CD8-positive, alpha-beta memory T cell (primary cell): ENCODE measurements at regions of chr9 and their contacts with region 1.

Region 1: DNA sequence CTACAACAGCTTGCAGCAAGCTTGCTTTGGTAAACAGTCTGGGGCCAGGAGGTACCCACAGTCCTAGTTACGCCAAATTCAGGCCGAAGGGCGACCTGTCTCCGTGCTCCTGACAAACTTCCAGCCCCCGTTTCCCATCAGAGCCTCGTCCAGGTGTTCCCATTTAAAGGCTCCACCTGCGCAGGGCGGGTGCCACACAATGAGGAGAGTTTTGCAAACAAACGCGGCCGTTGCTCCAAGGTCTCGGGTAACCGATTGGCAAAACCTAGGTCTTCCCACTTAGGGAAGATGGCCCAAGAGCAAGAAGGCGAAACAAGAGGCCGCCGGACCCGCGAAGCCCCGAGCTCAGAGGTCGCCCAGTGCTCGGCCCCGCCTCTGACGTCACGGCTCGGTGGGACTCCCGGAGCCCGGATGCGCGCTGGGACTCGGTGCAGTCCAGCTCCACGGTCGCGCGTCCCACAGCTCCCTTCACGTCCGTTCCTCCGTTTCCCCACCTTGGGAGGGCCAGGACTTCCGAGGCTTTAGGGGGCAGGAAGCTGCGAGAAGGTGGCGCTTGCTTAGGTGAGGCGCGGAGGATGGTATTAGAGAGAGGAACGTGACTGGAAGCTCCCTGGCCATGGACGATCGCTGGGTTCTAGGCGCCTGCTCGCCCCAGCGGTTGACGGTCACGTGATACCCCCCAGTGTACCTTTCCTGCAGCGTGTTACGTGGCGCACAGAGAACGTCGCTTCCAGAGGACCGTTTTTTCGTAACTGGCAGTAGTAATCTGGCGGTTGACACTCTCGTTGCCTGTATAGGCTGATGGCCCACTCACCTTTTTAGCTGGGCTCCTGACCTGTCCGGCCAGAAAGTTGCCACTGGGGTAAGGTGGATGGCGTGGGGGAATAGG is 41.8 kb upstream of the KDM4C start:
- DNase-seq: peak; percentile 27 to 80 (median 57)
- H3K4me3 ChIP-seq: peak overlapping the region; percentile 53
- H3K4me3 Mint-ChIP-seq: peak overlapping the region; percentile 85 to 91 (median 88)
- H3K27ac ChIP-seq: no peak overlapping the region
- H3K27ac Mint-ChIP-seq: peak overlapping the region; percentile 70 to 91 (median 86)
- H3K4me1 ChIP-seq: peaks cover 4% of the 10 kb centered on the region
- H3K4me1 Mint-ChIP-seq: peaks cover 4 to 13% (median 6%) of the 10 kb centered on the region in 3 donors
- H3K27me3 ChIP-seq: no peaks in the 10 kb centered on the region
- H3K27me3 Mint-ChIP-seq: peaks cover 0 to 2% of the 10 kb centered on the region in 2 donors

Region 2: GRCh38 chr9:6692881-6693361 is 23.1 kb before region 1 on chr9:
- CTCF ChIA-PET with region 1: no interaction called
- POLR2A ChIA-PET with region 1: no interaction called
- DNase-seq: no peak
- H3K4me3 ChIP-seq: no peak overlapping the region
- H3K4me3 Mint-ChIP-seq: no peak overlapping the region
- H3K27ac ChIP-seq: no peak overlapping the region
- H3K27ac Mint-ChIP-seq: no peak overlapping the region
- H3K4me1 ChIP-seq: no peaks in the 10 kb centered on the region
- H3K4me1 Mint-ChIP-seq: no peaks in the 10 kb centered on the region
- H3K27me3 ChIP-seq: no peaks in the 10 kb centered on the region
- H3K27me3 Mint-ChIP-seq: no peaks in the 10 kb centered on the region

Region 3: DNA sequence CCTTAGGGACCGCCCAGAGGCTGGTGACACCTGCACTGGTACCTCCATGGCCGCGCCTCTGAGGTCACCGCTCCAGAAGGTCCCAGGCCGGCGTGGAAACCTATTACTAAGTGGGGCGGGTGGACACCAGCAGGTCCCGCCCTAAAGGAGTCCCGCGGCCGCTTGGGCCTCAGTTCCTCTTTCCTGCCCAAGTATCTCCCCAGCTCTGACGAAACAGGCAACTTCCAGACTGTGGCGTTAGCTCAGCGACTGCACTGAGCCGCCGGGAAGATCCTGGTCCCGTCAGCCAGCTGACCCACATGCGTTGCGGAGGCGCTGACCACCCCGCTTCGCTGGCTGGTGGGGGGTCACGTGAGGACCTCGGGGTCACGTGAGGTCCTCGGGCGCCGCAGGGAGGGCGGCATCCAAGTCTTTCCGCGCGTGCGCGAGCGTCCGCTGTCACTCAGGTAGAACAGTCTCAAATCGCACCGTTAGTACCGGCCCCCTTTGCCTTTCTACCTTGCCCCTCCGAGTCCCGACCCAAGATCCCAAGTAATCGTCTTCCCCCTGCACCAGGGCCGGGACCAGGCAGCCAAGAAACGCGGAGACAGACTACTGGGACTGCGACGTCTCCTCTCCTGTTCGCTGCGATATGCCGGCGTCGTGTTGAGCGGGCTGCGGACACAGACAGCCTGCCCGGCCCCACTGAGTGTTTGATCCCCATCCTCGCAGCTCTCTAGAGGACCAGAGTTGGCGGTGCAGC is 11.9 kb before region 1 on chr9:
- CTCF ChIA-PET with region 1: interaction called, 5 read pairs
- POLR2A ChIA-PET with region 1: interaction called, 10 read pairs
- DNase-seq: peak; percentile 74 to 92 (median 78)
- H3K4me3 ChIP-seq: peak overlapping the region; percentile 92
- H3K4me3 Mint-ChIP-seq: peak overlapping the region; percentile 83 to 97 (median 92)
- H3K27ac ChIP-seq: peak overlapping the region; percentile 93
- H3K27ac Mint-ChIP-seq: peak overlapping the region; percentile 92 to 97 (median 94)
- H3K4me1 ChIP-seq: peaks cover 5% of the 10 kb centered on the region
- H3K4me1 Mint-ChIP-seq: peaks cover 6 to 18% (median 7%) of the 10 kb centered on the region in 3 donors
- H3K27me3 ChIP-seq: no peaks in the 10 kb centered on the region
- H3K27me3 Mint-ChIP-seq: peaks cover 0 to 2% of the 10 kb centered on the region in 2 donors

Region 4: GRCh38 chr9:6757456-6758247 is 41.7 kb after region 1 on chr9 and contains the start of gene KDM4C:
- CTCF ChIA-PET with region 1: interaction called, 5 read pairs
- POLR2A ChIA-PET with region 1: interaction called, 35 read pairs
- DNase-seq: peak; percentile 90 to 97 (median 93)
- H3K4me3 ChIP-seq: peak within 1 kb of the TSS; percentile 86
- H3K4me3 Mint-ChIP-seq: peak within 1 kb of the TSS; percentile 94 to 99 (median 97)
- H3K27ac ChIP-seq: peak within 1 kb of the TSS; percentile 97
- H3K27ac Mint-ChIP-seq: peak within 1 kb of the TSS; percentile 99 to 100 (median 100)
- H3K4me1 ChIP-seq: peaks cover 14% of the 10 kb centered on the region
- H3K4me1 Mint-ChIP-seq: peaks cover 28 to 44% (median 38%) of the 10 kb centered on the region in 3 donors
- H3K27me3 ChIP-seq: no peaks in the 10 kb centered on the region
- H3K27me3 Mint-ChIP-seq: peaks cover 0 to 7% of the 10 kb centered on the region in 2 donors
- total RNA-seq, gene KDM4C: 25.9 to 26.8 TPM